ENCODE measurements at regions of chr18 and their contacts with region 1.

Region 1: GRCh38 chr18:69845593-69846506 is 101.8 kb downstream of the CD226 start:
- DNase-seq: no peak
- H3K4me3 Mint-ChIP-seq: no peak overlapping the region
- H3K27ac Mint-ChIP-seq: no peak overlapping the region
- H3K4me1 Mint-ChIP-seq: no peaks in the 10 kb centered on the region
- H3K27me3 Mint-ChIP-seq: no peaks in the 10 kb centered on the region

Region 2: DNA sequence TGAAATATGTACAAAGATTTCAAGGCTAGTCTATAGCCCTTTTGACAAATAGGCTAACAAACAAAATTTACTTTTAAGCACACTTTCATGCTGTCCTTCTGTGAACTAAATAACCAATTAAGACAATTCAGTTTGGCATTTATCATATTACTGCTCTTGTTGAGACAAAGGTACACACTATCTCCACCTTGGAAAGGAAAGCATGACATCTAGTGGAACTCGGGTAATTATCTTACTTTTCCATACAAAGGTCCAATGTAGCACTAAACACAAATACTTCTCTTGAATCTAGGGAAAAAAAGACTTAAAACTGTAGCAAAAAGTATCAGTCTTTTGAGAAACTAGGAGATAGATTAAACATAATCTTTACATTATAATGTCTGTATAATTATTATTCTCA is 226.8 kb after region 1 on chr18:
- CTCF ChIA-PET with region 1: no interaction called
- POLR2A ChIA-PET with region 1: no interaction called
- intact Hi-C with region 1: loop called (anchors 10 kb)
- DNase-seq: no peak
- H3K4me3 Mint-ChIP-seq: no peak overlapping the region
- H3K27ac Mint-ChIP-seq: no peak overlapping the region
- H3K4me1 Mint-ChIP-seq: no peaks in the 10 kb centered on the region
- H3K27me3 Mint-ChIP-seq: no peaks in the 10 kb centered on the region